Naive thymus-derived CD4-positive, alpha-beta T cell (primary cell): ENCODE measurements at regions of chr6 and their contacts with region 1.

Region 1: DNA sequence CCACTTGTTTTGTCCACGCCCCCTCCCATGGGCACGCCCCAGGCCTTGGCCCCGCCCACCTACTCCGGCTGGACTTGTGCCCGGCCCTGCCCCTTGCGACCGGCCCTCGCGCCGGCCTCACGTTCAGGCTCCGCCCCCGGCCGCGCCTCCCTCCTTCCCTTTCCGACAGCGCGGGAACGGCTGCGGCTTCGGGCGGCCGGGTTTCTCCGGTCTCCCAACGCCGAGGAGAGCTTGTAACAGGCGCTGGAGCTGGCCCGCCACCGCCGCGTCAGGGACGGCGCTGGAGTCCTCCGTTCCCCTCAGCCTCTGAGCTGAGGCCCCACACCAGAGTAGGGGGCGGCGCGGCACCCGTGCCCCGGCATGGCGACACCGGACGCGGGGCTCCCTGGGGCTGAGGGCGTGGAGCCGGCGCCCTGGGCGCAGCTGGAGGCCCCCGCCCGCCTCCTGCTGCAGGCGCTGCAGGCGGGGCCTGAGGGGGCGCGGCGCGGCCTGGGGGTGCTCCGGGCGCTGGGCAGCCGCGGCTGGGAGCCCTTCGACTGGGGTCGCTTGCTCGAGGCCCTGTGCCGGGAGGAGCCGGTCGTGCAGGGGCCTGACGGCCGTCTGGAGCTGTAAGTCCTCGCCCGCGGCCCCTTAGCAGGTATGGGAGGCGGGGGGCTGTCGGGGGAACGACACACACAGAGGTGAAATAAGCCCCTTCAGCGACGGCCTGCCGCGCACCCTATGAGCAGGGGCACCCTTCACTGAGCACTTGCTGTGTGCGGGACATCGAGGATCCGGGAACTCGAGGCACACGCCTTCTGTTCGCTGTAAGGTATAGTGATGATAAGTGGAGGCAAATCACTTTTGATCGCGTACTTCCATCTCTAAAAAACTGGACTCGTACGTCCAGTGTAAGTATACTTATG is at the start of gene FANCE:
- DNase-seq: peak; percentile 62 to 99 (median 68)
- ATAC-seq: peak; percentile 94
- H3K4me3 ChIP-seq: peak within 1 kb of the TSS; percentile 63
- H3K4me3 Mint-ChIP-seq: peak within 1 kb of the TSS; percentile 74 to 91 (median 86)
- H3K27ac ChIP-seq: peak within 1 kb of the TSS; percentile 70
- H3K27ac Mint-ChIP-seq: peak within 1 kb of the TSS; percentile 53 to 92 (median 79)
- H3K4me1 ChIP-seq: peaks cover 8 to 11% of the 10 kb centered on the region in 2 donors
- H3K4me1 Mint-ChIP-seq: peaks cover 9 to 49% (median 42%) of the 10 kb centered on the region in 7 donors
- H3K27me3 ChIP-seq: no peaks in the 10 kb centered on the region
- H3K27me3 Mint-ChIP-seq: peaks cover 0 to 14% (median 0%) of the 10 kb centered on the region in 5 donors
- total RNA-seq, gene FANCE: 3.1 to 12.0 (median 6.4) TPM

Region 2: GRCh38 chr6:34953061-34954025 is 499.1 kb before region 1 on chr6:
- CTCF ChIA-PET with region 1: no interaction called
- POLR2A ChIA-PET with region 1: no interaction called
- intact Hi-C with region 1: no loop called
- DNase-seq: no peak
- ATAC-seq: no peak
- H3K4me3 ChIP-seq: no peak overlapping the region
- H3K4me3 Mint-ChIP-seq: no peak overlapping the region
- H3K27ac ChIP-seq: no peak overlapping the region
- H3K27ac Mint-ChIP-seq: no peak overlapping the region
- H3K4me1 ChIP-seq: peaks cover 0 to 5% of the 10 kb centered on the region in 2 donors
- H3K4me1 Mint-ChIP-seq: peaks cover 6 to 33% (median 23%) of the 10 kb centered on the region in 7 donors
- H3K27me3 ChIP-seq: no peaks in the 10 kb centered on the region
- H3K27me3 Mint-ChIP-seq: no peaks in the 10 kb centered on the region

Region 3: GRCh38 chr6:35265523-35265922 is 186.9 kb before region 1 on chr6:
- CTCF ChIA-PET with region 1: interaction called, 10 read pairs
- POLR2A ChIA-PET with region 1: no interaction called
- intact Hi-C with region 1: no loop called
- DNase-seq: no peak
- ATAC-seq: no peak
- H3K4me3 ChIP-seq: no peak overlapping the region
- H3K4me3 Mint-ChIP-seq: no peak overlapping the region
- H3K27ac ChIP-seq: no peak overlapping the region
- H3K27ac Mint-ChIP-seq: peak overlapping the region in 1 of 9 donors; percentile 15
- H3K4me1 ChIP-seq: peaks cover 2 to 4% of the 10 kb centered on the region in 2 donors
- H3K4me1 Mint-ChIP-seq: peaks cover 36 to 69% (median 57%) of the 10 kb centered on the region in 7 donors
- H3K27me3 ChIP-seq: no peaks in the 10 kb centered on the region
- H3K27me3 Mint-ChIP-seq: no peaks in the 10 kb centered on the region

Region 4: DNA sequence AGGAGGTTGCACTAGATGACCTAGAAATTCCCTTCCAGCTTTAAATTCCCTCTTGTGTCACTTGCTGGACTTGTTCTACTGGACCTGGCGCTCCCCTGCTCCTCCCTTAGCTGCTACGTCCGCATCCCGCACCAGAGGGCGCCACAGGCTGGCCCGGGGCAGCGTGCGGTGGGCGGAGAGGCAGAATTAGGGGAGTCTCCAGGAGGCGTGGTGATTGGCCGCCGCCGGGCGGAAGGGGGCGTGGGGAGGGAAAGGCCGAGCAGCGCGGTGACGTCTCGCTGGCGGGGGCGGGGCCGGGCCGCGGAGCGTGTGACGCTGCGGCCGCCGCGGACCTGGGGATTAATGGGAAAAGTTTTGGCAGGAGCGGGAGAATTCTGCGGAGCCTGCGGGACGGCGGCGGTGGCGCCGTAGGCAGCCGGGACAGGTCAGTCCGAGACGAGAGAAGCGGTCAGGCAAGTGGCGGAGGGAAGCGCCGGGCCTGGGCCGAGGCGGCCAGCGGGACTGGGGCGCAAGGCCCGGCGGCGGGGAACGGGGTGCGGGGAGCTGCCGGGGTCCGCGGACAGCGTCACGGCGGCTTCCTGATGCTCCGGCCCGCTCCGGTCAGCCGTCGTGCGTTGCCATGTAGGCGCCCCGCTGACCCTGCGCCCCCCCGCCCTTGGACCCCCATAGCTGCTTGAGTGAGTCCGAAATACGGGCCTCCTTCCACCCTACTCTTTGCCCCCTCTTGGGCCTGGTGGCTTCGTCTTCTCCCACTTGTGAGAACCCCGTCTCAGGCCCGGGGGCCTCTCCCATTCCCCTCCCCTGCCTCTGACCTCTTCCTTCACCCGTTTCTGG is 110.0 kb before region 1 on chr6 and contains the start of gene PPARD:
- CTCF ChIA-PET with region 1: interaction called, 99 read pairs
- POLR2A ChIA-PET with region 1: interaction called, 47 read pairs
- intact Hi-C with region 1: loop called (anchors 1 kb)
- DNase-seq: peak; percentile 92 to 100 (median 96)
- ATAC-seq: peak; percentile 100
- H3K4me3 ChIP-seq: peak within 1 kb of the TSS; percentile 70
- H3K4me3 Mint-ChIP-seq: peak within 1 kb of the TSS; percentile 88 to 100 (median 98)
- H3K27ac ChIP-seq: peak within 1 kb of the TSS; percentile 97
- H3K27ac Mint-ChIP-seq: peak within 1 kb of the TSS; percentile 88 to 98 (median 97)
- H3K4me1 ChIP-seq: peaks cover 19 to 35% of the 10 kb centered on the region in 2 donors
- H3K4me1 Mint-ChIP-seq: peaks cover 38 to 55% (median 49%) of the 10 kb centered on the region in 7 donors
- H3K27me3 ChIP-seq: no peaks in the 10 kb centered on the region
- H3K27me3 Mint-ChIP-seq: peaks cover 0 to 3% (median 0%) of the 10 kb centered on the region in 5 donors
- total RNA-seq, gene PPARD: 29.3 to 47.1 (median 36.0) TPM

Region 5: DNA sequence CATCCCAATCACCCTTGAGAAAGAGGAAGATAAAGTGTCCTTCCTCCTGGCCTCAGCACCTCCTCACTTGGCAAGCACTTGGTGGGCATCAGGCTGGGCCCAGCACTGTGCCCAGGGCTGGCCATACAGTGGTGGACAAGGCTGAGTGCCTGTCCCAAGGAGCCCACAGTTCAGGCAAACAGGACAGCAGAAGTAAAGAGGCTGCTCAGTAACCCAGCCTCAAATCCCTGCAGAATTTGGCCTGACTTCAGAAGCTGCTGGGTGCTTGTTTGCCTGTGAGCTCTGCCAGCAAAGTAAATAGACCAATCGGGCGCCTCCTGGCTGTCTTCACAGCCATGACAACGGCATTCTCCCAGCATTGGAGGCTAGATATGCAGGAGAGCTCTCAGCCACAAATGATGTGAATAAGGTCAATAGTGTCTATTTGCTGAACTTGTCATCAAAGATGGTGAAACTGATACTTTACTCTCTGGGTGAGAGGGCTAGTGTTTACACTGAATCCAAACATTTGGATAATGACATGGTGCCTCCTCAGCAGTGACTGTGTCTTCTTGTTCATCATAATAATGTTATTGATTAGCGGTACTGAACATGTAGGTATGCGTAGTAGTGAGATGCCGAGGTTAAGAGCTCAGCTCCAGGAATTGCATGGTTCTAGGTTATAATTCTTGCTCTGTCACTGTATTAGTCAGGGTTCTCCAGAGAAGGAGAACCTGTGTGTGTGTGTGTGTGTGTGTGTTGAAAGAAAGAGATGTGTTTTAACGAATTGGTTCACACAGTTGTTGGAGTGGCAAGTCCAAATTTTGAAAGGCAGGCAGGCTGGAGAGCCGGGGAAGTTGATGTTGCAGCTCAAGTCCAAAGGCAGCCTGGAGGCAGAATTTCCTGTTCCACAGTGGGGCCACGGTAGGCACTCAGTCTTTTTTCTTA is 37.1 kb before region 1 on chr6:
- CTCF ChIA-PET with region 1: interaction called, 16 read pairs
- POLR2A ChIA-PET with region 1: interaction called, 4 read pairs
- intact Hi-C with region 1: loop called (anchors 1 kb)
- DNase-seq: peak in 3 of 9 donors; percentile 23 to 26 (median 25)
- ATAC-seq: peak; percentile 53
- H3K4me3 ChIP-seq: no peak overlapping the region
- H3K4me3 Mint-ChIP-seq: peak overlapping the region in 2 of 10 donors; percentile 37 to 40
- H3K27ac ChIP-seq: no peak overlapping the region
- H3K27ac Mint-ChIP-seq: peak overlapping the region; percentile 5 to 84 (median 71)
- H3K4me1 ChIP-seq: peaks cover 0 to 44% of the 10 kb centered on the region in 2 donors
- H3K4me1 Mint-ChIP-seq: peaks cover 33 to 73% (median 67%) of the 10 kb centered on the region in 7 donors
- H3K27me3 ChIP-seq: no peaks in the 10 kb centered on the region
- H3K27me3 Mint-ChIP-seq: no peaks in the 10 kb centered on the region

Region 6: DNA sequence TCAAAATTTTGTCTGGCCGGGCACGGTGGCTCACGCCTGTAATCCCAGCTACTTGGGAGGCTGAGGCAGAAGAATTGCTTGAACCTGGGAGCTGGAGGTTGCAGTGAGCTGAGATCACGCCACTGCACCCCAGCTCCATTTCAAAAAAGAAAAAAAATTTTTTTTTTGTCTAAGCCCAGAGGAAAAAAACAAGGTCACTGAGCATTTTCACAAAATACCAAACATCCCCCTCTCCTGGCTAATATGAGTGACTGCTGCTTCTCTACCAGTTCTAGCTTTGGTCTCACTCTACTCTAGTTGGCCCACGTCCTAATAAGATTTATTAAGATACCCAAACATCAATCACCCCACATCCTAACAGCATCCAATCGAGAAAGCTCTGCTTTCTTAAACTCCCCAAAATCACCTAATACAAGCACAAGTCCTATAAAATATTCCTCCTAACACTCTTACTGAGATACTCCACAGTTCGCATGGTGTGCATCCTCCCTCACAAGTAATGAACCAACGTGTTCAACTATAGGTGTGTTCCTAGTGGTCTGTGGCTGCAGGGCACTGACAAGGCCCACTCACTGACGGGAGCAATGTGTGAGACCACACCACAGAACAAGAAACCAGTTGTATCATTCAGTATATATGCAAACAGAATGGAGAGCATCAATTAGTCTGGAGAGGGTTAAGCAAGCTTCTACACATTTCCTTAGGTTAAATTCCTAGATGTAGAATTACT is 172.1 kb after region 1 on chr6:
- CTCF ChIA-PET with region 1: no interaction called
- POLR2A ChIA-PET with region 1: no interaction called
- intact Hi-C with region 1: no loop called
- DNase-seq: peak in 7 of 9 donors; percentile 40 to 75 (median 70)
- ATAC-seq: peak; percentile 88
- H3K4me3 ChIP-seq: no peak overlapping the region
- H3K4me3 Mint-ChIP-seq: peak overlapping the region in 9 of 10 donors; percentile 11 to 49 (median 34)
- H3K27ac ChIP-seq: peak overlapping the region; percentile 66
- H3K27ac Mint-ChIP-seq: peak overlapping the region; percentile 64 to 93 (median 90)
- H3K4me1 ChIP-seq: peaks cover 5 to 35% of the 10 kb centered on the region in 2 donors
- H3K4me1 Mint-ChIP-seq: peaks cover 13 to 66% (median 55%) of the 10 kb centered on the region in 7 donors
- H3K27me3 ChIP-seq: no peaks in the 10 kb centered on the region
- H3K27me3 Mint-ChIP-seq: no peaks in the 10 kb centered on the region

Region 7: DNA sequence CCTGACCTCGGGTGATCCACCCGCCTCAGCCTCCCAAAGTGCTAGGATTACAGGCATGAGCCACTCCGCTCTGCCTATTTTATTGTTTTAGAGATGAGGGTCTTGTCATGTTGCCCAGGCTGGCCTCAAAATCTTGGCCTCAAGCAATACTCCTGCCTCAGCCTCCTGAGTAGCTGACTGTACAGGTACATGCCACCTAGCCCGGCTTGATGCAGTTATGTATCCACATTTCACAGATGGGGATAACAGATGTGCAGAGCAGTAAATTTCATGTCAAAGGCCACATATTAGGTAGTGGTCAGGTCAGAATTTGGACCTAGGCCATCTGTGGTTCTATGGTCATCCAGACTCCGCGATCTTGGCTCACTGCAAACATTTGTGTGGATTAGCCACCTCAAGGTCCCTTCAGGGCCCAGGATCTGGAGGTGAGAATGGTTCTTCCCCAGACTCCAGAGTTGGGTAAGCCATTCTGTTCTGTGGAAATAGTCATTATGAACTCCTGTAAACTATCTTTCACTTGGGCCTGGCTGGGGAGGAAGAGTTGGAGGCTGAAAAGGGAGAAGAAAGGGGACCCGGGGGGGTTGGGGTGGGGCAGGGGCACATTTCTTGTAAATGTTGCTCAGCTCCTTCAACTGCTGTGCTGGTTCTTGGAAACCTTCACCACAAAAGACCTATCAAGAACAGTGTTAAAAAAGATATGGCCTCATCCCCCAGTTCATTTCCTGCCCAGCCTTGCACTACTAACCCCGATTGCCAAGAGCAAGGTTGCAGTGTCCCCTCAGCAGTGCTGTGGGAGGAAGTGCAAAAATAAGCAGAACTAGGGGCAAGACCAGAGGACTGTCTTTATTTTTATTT is 1730.5 kb after region 1 on chr6:
- CTCF ChIA-PET with region 1: no interaction called
- POLR2A ChIA-PET with region 1: interaction called, 11 read pairs
- intact Hi-C with region 1: no loop called
- DNase-seq: peak in 8 of 9 donors; percentile 56 to 85 (median 70)
- ATAC-seq: peak; percentile 97
- H3K4me3 ChIP-seq: peak overlapping the region; percentile 41
- H3K4me3 Mint-ChIP-seq: peak overlapping the region; percentile 62 to 86 (median 72)
- H3K27ac ChIP-seq: peak overlapping the region; percentile 73
- H3K27ac Mint-ChIP-seq: peak overlapping the region; percentile 88 to 98 (median 94)
- H3K4me1 ChIP-seq: peaks cover 44 to 61% of the 10 kb centered on the region in 2 donors
- H3K4me1 Mint-ChIP-seq: peaks cover 21 to 72% (median 63%) of the 10 kb centered on the region in 7 donors
- H3K27me3 ChIP-seq: no peaks in the 10 kb centered on the region
- H3K27me3 Mint-ChIP-seq: no peaks in the 10 kb centered on the region